PC-9 (cell line): ENCODE measurements at regions of chr3 and their contacts with region 1.

Region 1: GRCh38 chr3:123953735-123954134 is 7.3 kb downstream of the CCDC14 start:
- DNase-seq: no peak
- H3K4me3 ChIP-seq: no peak overlapping the region
- H3K27ac ChIP-seq: no peak overlapping the region
- H3K4me1 ChIP-seq: no peaks in the 10 kb centered on the region
- H3K27me3 ChIP-seq: no peaks in the 10 kb centered on the region
- CTCF ChIP-seq: no peak

Region 2: GRCh38 chr3:123778991-123779622 is 174.6 kb before region 1 on chr3:
- CTCF ChIA-PET with region 1: no interaction called
- POLR2A ChIA-PET with region 1: interaction called, 13 read pairs
- intact Hi-C with region 1: no loop called
- DNase-seq: no peak
- H3K4me3 ChIP-seq: no peak overlapping the region
- H3K27ac ChIP-seq: no peak overlapping the region
- H3K4me1 ChIP-seq: no peaks in the 10 kb centered on the region
- H3K27me3 ChIP-seq: no peaks in the 10 kb centered on the region
- CTCF ChIP-seq: no peak

Region 3: GRCh38 chr3:123853686-123854372 is 99.9 kb before region 1 on chr3:
- CTCF ChIA-PET with region 1: no interaction called
- POLR2A ChIA-PET with region 1: no interaction called
- intact Hi-C with region 1: no loop called
- DNase-seq: no peak
- H3K4me3 ChIP-seq: no peak overlapping the region
- H3K27ac ChIP-seq: no peak overlapping the region
- H3K4me1 ChIP-seq: no peaks in the 10 kb centered on the region
- H3K27me3 ChIP-seq: no peaks in the 10 kb centered on the region
- CTCF ChIP-seq: no peak

Region 4: GRCh38 chr3:123920383-123920782 is 33.4 kb before region 1 on chr3:
- CTCF ChIA-PET with region 1: no interaction called
- POLR2A ChIA-PET with region 1: no interaction called
- intact Hi-C with region 1: loop called (anchors 1 kb)
- DNase-seq: no peak
- H3K4me3 ChIP-seq: no peak overlapping the region
- H3K27ac ChIP-seq: no peak overlapping the region
- H3K4me1 ChIP-seq: no peaks in the 10 kb centered on the region
- H3K27me3 ChIP-seq: no peaks in the 10 kb centered on the region
- CTCF ChIP-seq: no peak